ENCODE measurements at regions of chr17 and their contacts with region 1.

Region 1: DNA sequence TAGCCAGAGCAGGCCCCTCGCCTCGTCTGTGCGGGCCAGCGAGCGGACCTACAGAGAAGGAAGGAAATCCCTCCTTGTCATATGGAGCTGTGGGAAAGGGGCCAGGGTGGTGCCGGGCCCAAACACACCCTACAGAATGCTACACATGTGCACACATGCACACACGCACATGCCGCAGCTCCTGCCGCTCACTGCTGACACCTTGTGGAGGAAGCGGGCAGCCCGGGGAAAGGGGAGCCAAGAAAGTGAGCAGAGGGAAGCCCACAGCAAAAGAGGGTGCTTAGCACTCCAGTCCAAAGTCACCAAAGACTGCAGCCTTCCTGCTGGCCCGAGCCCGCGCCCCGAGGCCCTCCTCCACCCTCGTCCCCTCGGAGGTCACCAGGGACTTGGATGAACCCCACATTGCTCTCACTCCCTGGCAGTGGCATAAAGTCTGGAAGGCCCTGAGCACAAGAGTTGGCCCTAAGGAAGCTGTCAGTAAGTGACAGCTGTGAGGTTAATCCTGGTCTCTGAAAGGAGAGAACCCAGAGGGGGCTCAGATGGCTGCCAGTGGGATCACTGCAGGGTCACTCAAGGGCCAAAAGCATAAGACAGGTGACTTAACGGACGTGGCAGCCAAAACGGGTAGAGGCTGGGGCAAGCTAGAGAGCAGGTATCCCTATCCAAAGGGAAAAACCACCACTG is 68.2 kb downstream of the MYO18A start:
- DNase-seq: peak; percentile 83
- ATAC-seq: peak; percentile 45
- H3K4me3 Mint-ChIP-seq: no peak overlapping the region
- H3K27ac Mint-ChIP-seq: no peak overlapping the region
- H3K4me1 Mint-ChIP-seq: peaks cover 27% of the 10 kb centered on the region
- H3K27me3 Mint-ChIP-seq: no peaks in the 10 kb centered on the region
- CTCF ChIP-seq: peak; percentile 72

Region 2: DNA sequence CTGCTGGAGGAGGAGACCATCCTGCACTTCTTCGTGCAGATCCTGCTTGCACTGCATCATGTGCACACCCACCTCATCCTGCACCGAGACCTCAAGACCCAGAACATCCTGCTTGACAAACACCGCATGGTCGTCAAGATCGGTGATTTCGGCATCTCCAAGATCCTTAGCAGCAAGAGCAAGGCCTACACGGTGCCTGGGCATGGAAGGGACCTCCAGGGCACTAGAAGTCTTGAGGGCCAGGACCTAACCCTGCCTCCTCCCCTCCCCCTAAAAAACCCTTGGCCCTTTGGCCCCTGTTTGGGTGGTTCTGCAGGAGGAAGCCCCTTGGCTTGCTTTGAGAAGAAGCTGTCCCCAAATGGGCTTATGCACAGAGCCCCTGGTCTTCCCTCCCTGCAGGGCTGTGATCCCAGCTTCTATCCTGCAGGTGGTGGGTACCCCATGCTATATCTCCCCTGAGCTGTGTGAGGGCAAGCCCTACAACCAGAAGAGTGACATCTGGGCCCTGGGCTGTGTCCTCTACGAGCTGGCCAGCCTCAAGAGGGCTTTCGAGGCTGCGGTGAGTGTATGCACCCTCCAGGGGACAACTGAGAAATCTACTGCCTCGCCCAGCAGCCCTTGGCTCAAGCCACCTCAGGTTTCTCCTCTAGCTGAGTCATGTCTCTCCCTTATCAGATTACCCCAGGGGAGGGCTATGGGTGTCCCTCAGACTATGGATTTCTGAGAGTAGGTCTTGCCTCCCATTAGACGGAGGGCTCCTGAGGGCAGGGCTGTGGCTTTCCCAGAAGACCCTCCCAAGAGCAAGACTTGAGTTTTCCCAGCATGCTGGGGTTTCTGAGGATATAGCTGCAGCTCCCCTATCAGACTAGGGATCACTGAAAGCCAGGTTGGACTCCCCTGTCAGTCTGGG is 376.9 kb before region 1 on chr17:
- CTCF ChIA-PET with region 1: no interaction called
- POLR2A ChIA-PET with region 1: no interaction called
- DNase-seq: no peak
- ATAC-seq: no peak
- H3K4me3 Mint-ChIP-seq: no peak overlapping the region
- H3K27ac Mint-ChIP-seq: no peak overlapping the region
- H3K4me1 Mint-ChIP-seq: no peaks in the 10 kb centered on the region
- H3K27me3 Mint-ChIP-seq: no peaks in the 10 kb centered on the region
- CTCF ChIP-seq: no peak

Region 3: GRCh38 chr17:29005936-29006511 is 105.9 kb before region 1 on chr17 and contains the start of gene SEZ6:
- CTCF ChIA-PET with region 1: interaction called, 228 read pairs
- POLR2A ChIA-PET with region 1: interaction called, 3 read pairs
- DNase-seq: peak; percentile 91
- ATAC-seq: peak; percentile 63
- H3K4me3 Mint-ChIP-seq: peak within 1 kb of the TSS; percentile 69
- H3K27ac Mint-ChIP-seq: no peak within 1 kb of the TSS
- H3K4me1 Mint-ChIP-seq: peaks cover 76% of the 10 kb centered on the region
- H3K27me3 Mint-ChIP-seq: peaks cover 50% of the 10 kb centered on the region
- CTCF ChIP-seq: no peak
- total RNA-seq, gene SEZ6: 1.4 to 3.0 TPM (median 1.6 TPM) in 3 replicates

Region 4: GRCh38 chr17:29042679-29043538 is 69.0 kb before region 1 on chr17 and contains the start of gene PIPOX:
- CTCF ChIA-PET with region 1: interaction called, 42 read pairs
- POLR2A ChIA-PET with region 1: no interaction called
- DNase-seq: peak; percentile 80
- ATAC-seq: peak; percentile 87
- H3K4me3 Mint-ChIP-seq: peak within 1 kb of the TSS; percentile 41
- H3K27ac Mint-ChIP-seq: peak within 1 kb of the TSS; percentile 98
- H3K4me1 Mint-ChIP-seq: peaks cover 63% of the 10 kb centered on the region
- H3K27me3 Mint-ChIP-seq: no peaks in the 10 kb centered on the region
- CTCF ChIP-seq: no peak
- total RNA-seq, gene PIPOX: 32.4 to 34.2 TPM (median 34.1 TPM) in 3 replicates

Region 5: GRCh38 chr17:29069526-29070041 is 42.4 kb before region 1 on chr17:
- CTCF ChIA-PET with region 1: interaction called, 53 read pairs
- POLR2A ChIA-PET with region 1: no interaction called
- DNase-seq: peak; percentile 61
- ATAC-seq: peak; percentile 56
- H3K4me3 Mint-ChIP-seq: no peak overlapping the region
- H3K27ac Mint-ChIP-seq: no peak overlapping the region
- H3K4me1 Mint-ChIP-seq: peaks cover 45% of the 10 kb centered on the region
- H3K27me3 Mint-ChIP-seq: peaks cover 12% of the 10 kb centered on the region
- CTCF ChIP-seq: no peak

Region 6: GRCh38 chr17:29084541-29085146 is 27.3 kb before region 1 on chr17:
- CTCF ChIA-PET with region 1: interaction called, 51 read pairs
- POLR2A ChIA-PET with region 1: no interaction called
- DNase-seq: no peak
- ATAC-seq: peak; percentile 19
- H3K4me3 Mint-ChIP-seq: no peak overlapping the region
- H3K27ac Mint-ChIP-seq: peak overlapping the region; percentile 5; the same call in 1 of the 2 replicates
- H3K4me1 Mint-ChIP-seq: peaks cover 43% of the 10 kb centered on the region
- H3K27me3 Mint-ChIP-seq: no peaks in the 10 kb centered on the region
- CTCF ChIP-seq: no peak

Measured in WTC11 (cell line).